Activated CD4-positive, alpha-beta T cell treated with anti-CD3 and anti-CD28 coated beads, Interleukin-2, amount 10 ng/mL, durations not matched to agents 24 days and 14 days (primary cell): ENCODE measurements at regions of chr19 and their contacts with region 1.

Region 1: DNA sequence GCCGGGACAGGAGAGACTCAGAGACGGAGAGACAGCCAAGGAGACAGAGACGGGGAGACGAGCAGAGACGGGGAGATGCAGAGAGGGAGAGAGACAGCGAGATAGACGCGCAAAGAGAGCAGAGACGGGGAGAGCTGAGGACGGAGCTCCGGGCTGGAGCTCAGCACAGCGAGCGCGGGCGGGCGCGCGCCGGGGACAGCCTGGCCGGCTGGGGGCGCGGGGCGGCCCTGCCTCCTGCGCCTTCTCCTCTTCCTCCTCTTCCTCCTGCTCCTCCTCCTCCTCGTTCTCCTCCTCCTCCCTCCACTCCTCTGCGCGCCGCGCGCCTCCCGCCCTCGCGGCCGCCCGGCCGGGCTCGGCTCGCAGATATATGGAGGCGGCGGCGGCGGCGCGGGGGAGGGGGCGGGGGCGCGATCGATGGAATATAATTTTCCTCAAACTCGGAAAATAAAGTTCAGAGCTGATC is at the start of gene ERFL:
- DNase-seq: peak; percentile 80
- H3K4me3 Mint-ChIP-seq: peak within 1 kb of the TSS; percentile 80
- H3K27ac Mint-ChIP-seq: peak within 1 kb of the TSS; percentile 84
- H3K4me1 Mint-ChIP-seq: peaks cover 25% of the 10 kb centered on the region
- H3K27me3 Mint-ChIP-seq: peaks cover 8% of the 10 kb centered on the region
- total RNA-seq, gene ERFL: 3.1 and 4.2 TPM in 2 replicates

Region 2: DNA sequence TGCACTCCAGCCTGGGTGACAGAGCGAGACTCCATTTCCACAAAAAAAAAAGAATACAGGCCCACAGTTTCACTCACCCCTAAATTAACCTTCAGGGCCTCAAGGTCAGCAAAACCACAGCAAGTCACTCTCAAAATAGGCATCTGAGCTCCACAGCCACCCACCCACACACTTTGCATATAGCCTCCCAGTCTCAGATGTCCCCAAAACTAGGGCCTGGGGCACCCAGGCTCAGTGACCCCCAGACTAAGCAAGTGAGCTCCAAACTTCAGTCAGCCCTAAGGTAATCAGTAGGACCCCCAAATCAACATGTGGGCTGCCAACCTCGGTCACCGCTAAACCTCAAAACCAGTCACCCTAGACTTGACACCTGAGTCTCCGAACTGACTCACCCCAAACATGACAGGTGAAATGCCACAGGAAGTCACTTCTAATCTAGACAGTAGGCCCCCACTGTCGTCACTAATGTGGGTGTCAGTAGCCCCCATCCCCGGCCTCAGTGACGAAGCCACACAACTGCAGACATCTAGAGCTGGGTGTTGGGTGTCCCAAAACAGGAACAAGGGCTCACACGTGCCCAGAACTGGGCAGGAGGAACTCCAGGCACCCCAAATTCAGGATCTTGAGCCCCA is 17.0 kb after region 1 on chr19:
- intact Hi-C with region 1: loop called (anchors 2 kb)
- DNase-seq: peak; percentile 90
- H3K4me3 Mint-ChIP-seq: peak overlapping the region; percentile 76
- H3K27ac Mint-ChIP-seq: peak overlapping the region; percentile 99
- H3K4me1 Mint-ChIP-seq: peaks cover 49% of the 10 kb centered on the region
- H3K27me3 Mint-ChIP-seq: peaks cover 9% of the 10 kb centered on the region